K562 (cell line): ENCODE measurements at regions of chr7 and their contacts with region 1.

Region 1: GRCh38 chr7:101507791-101508252 is 121.3 kb downstream of the MYL10 start:
- DNase-seq: peak; percentile 67 to 79 (median 76)
- ATAC-seq: peak; percentile 87
- H3K4me3 ChIP-seq: no peak overlapping the region
- H3K27ac ChIP-seq: no peak overlapping the region
- H3K4me1 ChIP-seq: no peaks in the 10 kb centered on the region
- H3K27me3 ChIP-seq: peaks cover 21 to 87% of the 10 kb centered on the region in 2 experiments
- CTCF ChIP-seq: peak; percentile 97 to 100 (median 100)
- EP300 ChIP-seq: no peak
- POLR2A ChIP-seq: no peak
- RAD21 ChIP-seq: peak; percentile 58 to 81

Region 2: GRCh38 chr7:101294039-101294831 is 213.6 kb before region 1 on chr7:
- CTCF ChIA-PET with region 1: no interaction called
- POLR2A ChIA-PET with region 1: no interaction called
- in situ Hi-C with region 1: no loop called
- intact Hi-C with region 1: loop called (anchors 5 kb)
- DNase-seq: no peak
- ATAC-seq: no peak
- H3K4me3 ChIP-seq: no peak overlapping the region
- H3K27ac ChIP-seq: no peak overlapping the region
- H3K4me1 ChIP-seq: no peaks in the 10 kb centered on the region
- H3K27me3 ChIP-seq: peaks cover 12 to 59% of the 10 kb centered on the region in 2 experiments
- CTCF ChIP-seq: no peak
- EP300 ChIP-seq: no peak
- POLR2A ChIP-seq: no peak
- RAD21 ChIP-seq: no peak

Region 3: GRCh38 chr7:101363734-101364374 is 144.0 kb before region 1 on chr7:
- CTCF ChIA-PET with region 1: interaction called, 19 read pairs
- POLR2A ChIA-PET with region 1: no interaction called
- in situ Hi-C with region 1: no loop called
- intact Hi-C with region 1: loop called (anchors 1 kb)
- DNase-seq: peak; percentile 76 to 93 (median 90)
- ATAC-seq: peak; percentile 100
- H3K4me3 ChIP-seq: no peak overlapping the region; the same call in 1 of the 2 replicates
- H3K27ac ChIP-seq: no peak overlapping the region
- H3K4me1 ChIP-seq: peaks cover 0 to 12% of the 10 kb centered on the region in 2 experiments; a peak in 2 of 5 replicates
- H3K27me3 ChIP-seq: peaks cover 9 to 29% of the 10 kb centered on the region in 2 experiments; a peak in 3 of 5 replicates
- CTCF ChIP-seq: peak; percentile 84 to 94 (median 84)
- EP300 ChIP-seq: no peak
- POLR2A ChIP-seq: no peak
- RAD21 ChIP-seq: peak; percentile 60 to 74